ENCODE measurements at regions of chr3 and their contacts with region 1.

Region 1: DNA sequence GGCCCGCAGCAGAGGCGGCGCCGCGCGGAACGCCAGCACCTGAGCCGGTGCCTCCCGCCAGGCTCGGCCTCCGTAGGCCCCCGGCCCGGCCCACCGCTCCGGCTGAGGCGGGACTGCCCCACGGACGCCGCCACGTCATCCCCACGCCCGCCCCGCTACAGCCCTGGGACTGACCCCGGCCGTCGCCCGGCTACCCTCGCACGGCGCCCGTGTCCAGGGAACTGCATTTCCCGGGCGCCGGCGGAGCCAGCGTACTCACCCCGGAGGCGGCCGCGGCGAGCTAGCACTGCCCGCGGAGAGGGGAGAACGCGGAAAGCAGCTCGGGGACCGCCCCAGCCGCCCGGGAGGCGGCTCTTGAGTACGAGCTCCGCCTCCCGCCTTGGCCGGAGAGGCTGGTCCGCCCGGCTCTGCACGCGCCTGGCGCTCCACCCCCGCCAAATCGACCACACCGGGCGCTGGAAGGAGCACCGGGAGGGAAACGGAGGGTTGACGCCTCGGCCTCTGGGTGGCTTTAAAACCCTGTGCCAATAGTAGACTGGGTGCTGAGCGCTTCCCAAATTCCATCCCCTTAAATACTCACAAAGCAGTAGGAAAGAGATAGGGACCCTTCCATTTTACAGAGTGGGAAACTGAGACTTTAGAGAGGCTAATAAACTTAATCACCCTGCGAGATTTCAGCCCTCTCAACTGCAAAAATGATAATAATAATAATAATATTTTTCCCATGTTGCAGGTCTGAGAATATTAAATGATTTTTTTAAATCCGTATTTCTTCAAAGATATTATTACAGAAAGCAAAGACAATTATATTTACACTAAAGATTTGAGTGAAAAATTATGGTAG is at the start of gene B4GALT4:
- DNase-seq: peak; percentile 91
- H3K4me3 ChIP-seq: peak within 1 kb of the TSS; percentile 58
- H3K27ac ChIP-seq: peak within 1 kb of the TSS; percentile 84
- H3K4me1 ChIP-seq: no peaks in the 10 kb centered on the region
- H3K27me3 ChIP-seq: no peaks in the 10 kb centered on the region
- CTCF ChIP-seq: no peak
- total RNA-seq, gene B4GALT4: 43.1 to 54.5 TPM

Region 2: DNA sequence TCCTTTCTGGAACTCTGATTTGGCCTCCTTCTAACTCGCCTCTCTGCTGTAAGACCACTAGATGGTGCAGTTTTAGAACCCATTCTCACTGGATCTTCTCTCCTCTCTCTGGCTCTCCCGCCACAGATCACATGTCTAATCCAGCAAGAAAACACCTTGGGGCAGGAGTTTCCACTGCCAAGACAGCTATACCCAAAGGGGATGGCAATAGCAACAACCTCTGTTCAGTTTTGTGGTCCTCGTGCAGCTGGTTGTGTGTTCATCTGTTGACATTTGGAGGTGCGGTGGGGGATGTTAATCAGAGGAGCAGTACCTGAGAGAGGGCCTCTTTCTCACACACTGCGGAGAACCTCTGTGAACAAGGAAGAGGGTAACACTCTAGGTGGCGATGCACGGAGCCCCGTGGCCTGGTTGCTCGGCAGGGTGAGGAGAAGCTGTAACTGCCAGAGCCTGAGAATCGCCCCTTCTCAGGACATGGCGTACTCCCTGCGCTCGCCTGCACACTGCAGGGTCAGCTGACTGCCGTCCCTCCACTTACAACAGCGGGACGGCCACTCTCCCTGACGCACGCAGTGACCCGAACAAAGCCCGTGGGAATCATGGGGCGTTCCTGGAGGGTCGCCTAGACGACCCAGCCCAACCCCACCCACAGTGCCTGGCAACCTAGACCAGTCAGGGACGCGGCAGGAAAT is 95.2 kb before region 1 on chr3 and contains the start of gene TEX55:
- intact Hi-C with region 1: loop called (anchors 2 kb)
- DNase-seq: peak; percentile 29
- H3K4me3 ChIP-seq: no peak within 1 kb of the TSS
- H3K27ac ChIP-seq: no peak within 1 kb of the TSS
- H3K4me1 ChIP-seq: no peaks in the 10 kb centered on the region
- H3K27me3 ChIP-seq: no peaks in the 10 kb centered on the region
- CTCF ChIP-seq: peak; percentile 31
- total RNA-seq, gene TEX55: not detected

Region 3: GRCh38 chr3:119944091-119944490 is 703.3 kb after region 1 on chr3:
- intact Hi-C with region 1: no loop called
- DNase-seq: no peak
- H3K4me3 ChIP-seq: no peak overlapping the region
- H3K27ac ChIP-seq: no peak overlapping the region
- H3K4me1 ChIP-seq: no peaks in the 10 kb centered on the region
- H3K27me3 ChIP-seq: no peaks in the 10 kb centered on the region
- CTCF ChIP-seq: no peak